MCF 10A (cell line): ENCODE measurements at regions of chr9 and their contacts with region 1.

Region 1: GRCh38 chr9:113275157-113276131 is at the starts of genes CDC26 and PRPF4:
- DNase-seq: peak; percentile 97
- H3K4me3 Mint-ChIP-seq: no peak within 1 kb of the TSS
- H3K27ac Mint-ChIP-seq: no peak within 1 kb of the TSS
- H3K4me1 Mint-ChIP-seq: peaks cover 14% of the 10 kb centered on the region
- H3K27me3 Mint-ChIP-seq: no peaks in the 10 kb centered on the region
- CTCF ChIP-seq: no peak
- total RNA-seq, gene CDC26: 51.6 and 64.8 TPM in 2 replicates
- total RNA-seq, gene PRPF4: 35.6 and 37.3 TPM in 2 replicates

Region 2: GRCh38 chr9:113150670-113151611 is 124.5 kb before region 1 on chr9 and contains the start of gene SLC31A2:
- CTCF ChIA-PET with region 1: interaction called, 3 read pairs
- POLR2A ChIA-PET with region 1: interaction called, 8 read pairs
- intact Hi-C with region 1: loop called (anchors 2 kb)
- DNase-seq: peak; percentile 83
- H3K4me3 Mint-ChIP-seq: peak within 1 kb of the TSS; percentile 65
- H3K27ac Mint-ChIP-seq: peak within 1 kb of the TSS; percentile 50
- H3K4me1 Mint-ChIP-seq: peaks cover 27% of the 10 kb centered on the region
- H3K27me3 Mint-ChIP-seq: peaks cover 10% of the 10 kb centered on the region
- CTCF ChIP-seq: peak; percentile 22
- total RNA-seq, gene SLC31A2: 14.9 and 16.1 TPM in 2 replicates

Region 3: GRCh38 chr9:113255438-113255837 is 20.0 kb before region 1 on chr9:
- CTCF ChIA-PET with region 1: interaction called, 8 read pairs
- POLR2A ChIA-PET with region 1: interaction called, 12 read pairs
- intact Hi-C with region 1: no loop called
- DNase-seq: no peak
- H3K4me3 Mint-ChIP-seq: no peak overlapping the region
- H3K27ac Mint-ChIP-seq: no peak overlapping the region
- H3K4me1 Mint-ChIP-seq: no peaks in the 10 kb centered on the region
- H3K27me3 Mint-ChIP-seq: no peaks in the 10 kb centered on the region
- CTCF ChIP-seq: no peak

Region 4: GRCh38 chr9:113340017-113340699 is 64.7 kb after region 1 on chr9 and contains the start of gene WDR31:
- CTCF ChIA-PET with region 1: interaction called, 8 read pairs
- POLR2A ChIA-PET with region 1: interaction called, 20 read pairs
- intact Hi-C with region 1: no loop called
- DNase-seq: peak; percentile 82
- H3K4me3 Mint-ChIP-seq: peak within 1 kb of the TSS; percentile 80
- H3K27ac Mint-ChIP-seq: peak within 1 kb of the TSS; percentile 76
- H3K4me1 Mint-ChIP-seq: peaks cover 20% of the 10 kb centered on the region
- H3K27me3 Mint-ChIP-seq: no peaks in the 10 kb centered on the region
- CTCF ChIP-seq: no peak
- total RNA-seq, gene WDR31: 2.3 and 2.9 TPM in 2 replicates

Region 5: DNA sequence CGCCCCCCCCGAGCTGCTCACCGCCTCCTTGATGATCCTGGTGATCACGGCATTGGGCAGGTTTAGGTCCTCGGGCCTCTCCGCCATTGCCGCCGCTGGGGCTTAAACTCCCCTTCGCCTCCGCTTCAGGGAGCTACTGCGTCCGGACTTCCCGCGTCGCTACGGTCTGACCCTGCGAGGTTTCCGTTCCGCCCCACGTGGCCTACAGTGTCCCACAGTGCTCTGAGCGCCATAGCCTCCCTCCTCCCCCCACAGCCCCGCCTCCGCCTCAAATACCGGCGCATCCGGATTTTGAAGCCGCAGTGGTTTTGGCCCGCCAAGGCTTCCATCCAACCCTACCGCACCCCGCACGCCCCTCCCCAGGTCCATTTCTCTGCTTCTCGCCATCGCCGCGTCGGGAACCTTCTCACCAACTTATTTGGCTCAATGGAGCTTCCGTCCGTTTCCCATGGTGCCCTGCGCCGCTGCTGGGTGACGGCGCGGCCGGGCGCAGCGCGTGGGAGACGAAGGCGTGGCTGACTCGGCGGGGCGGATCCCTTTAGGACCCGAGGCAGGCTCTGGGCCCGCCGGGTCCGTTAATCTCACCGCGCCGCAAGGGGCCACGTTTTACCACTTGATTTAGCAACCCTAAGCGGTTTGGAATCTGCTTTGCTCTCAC is 134.9 kb after region 1 on chr9 and contains the starts of genes C9orf43 and POLE3:
- CTCF ChIA-PET with region 1: interaction called, 141 read pairs
- POLR2A ChIA-PET with region 1: interaction called, 49 read pairs
- intact Hi-C with region 1: no loop called
- DNase-seq: peak; percentile 96
- H3K4me3 Mint-ChIP-seq: peak within 1 kb of the TSS; percentile 77
- H3K27ac Mint-ChIP-seq: peak within 1 kb of the TSS; percentile 96
- H3K4me1 Mint-ChIP-seq: peaks cover 18% of the 10 kb centered on the region
- H3K27me3 Mint-ChIP-seq: no peaks in the 10 kb centered on the region
- CTCF ChIP-seq: no peak
- total RNA-seq, gene C9orf43: 0.84 and 1.1 TPM in 2 replicates
- total RNA-seq, gene POLE3: 51.8 and 54.0 TPM in 2 replicates

Region 6: DNA sequence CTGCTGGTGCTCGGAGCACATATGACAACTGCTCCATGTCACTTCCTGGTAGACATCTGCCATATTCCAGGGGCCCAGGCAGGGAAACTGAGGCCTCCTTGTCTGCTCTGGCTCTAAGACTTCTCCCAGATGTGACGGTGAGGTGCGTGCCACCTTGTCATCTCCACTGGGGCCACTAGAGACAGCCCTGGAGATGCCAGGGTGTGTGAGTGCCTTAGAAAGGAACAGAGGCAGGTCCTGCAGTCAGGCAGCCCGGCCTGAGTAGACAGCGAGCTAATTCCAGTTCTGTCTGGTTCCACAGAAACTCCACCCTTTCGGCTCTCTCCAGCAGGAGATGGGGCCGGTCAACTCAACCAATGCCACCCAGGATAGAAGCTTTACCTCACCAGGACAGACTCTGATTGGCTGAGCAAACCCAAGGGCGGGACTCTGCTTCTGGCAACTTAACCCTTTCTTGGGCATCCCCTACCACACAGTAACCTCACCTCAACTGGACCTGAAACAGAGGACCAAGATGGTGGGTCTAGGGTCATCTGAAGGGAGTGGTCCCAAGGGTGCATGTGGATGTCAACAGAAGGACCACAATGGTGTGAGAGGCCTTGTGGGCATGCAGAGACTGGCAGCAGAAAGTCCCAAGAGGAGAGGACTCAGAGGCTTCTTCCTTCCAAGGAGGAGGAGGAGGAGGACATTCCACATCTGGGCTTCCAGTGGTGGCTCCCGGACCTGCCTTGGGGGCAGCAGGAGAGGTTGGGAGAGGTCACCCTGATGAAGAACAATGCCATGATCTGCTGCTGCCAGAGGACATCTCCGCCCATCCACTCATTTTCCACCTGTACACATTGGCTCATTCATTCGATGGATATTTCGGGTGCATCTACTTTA is 265.8 kb after region 1 on chr9:
- CTCF ChIA-PET with region 1: no interaction called
- POLR2A ChIA-PET with region 1: no interaction called
- intact Hi-C with region 1: no loop called
- DNase-seq: peak; percentile 62
- H3K4me3 Mint-ChIP-seq: no peak overlapping the region
- H3K27ac Mint-ChIP-seq: no peak overlapping the region
- H3K4me1 Mint-ChIP-seq: no peaks in the 10 kb centered on the region
- H3K27me3 Mint-ChIP-seq: no peaks in the 10 kb centered on the region
- CTCF ChIP-seq: no peak